ENCODE measurements at regions of chr15 and their contacts with region 1.

Region 1: GRCh38 chr15:90482124-90483011 is 47.4 kb upstream of the CRTC3 start:
- DNase-seq: peak; percentile 59
- H3K4me3 ChIP-seq: no peak overlapping the region
- CTCF ChIP-seq: peak; percentile 81

Region 2: GRCh38 chr15:89442671-89443307 is 1039.6 kb before region 1 on chr15:
- in situ Hi-C with region 1: no loop called
- DNase-seq: peak; percentile 9
- H3K4me3 ChIP-seq: no peak overlapping the region
- CTCF ChIP-seq: peak; percentile 74

Region 3: GRCh38 chr15:90352109-90352893 is 130.1 kb before region 1 on chr15 and contains the start of gene ZNF774:
- in situ Hi-C with region 1: loop called (anchors 25 kb)
- DNase-seq: peak; percentile 94
- H3K4me3 ChIP-seq: peak within 1 kb of the TSS; percentile 77
- CTCF ChIP-seq: no peak